Dorsolateral prefrontal cortex (tissue), 120 donors: ENCODE measurements at regions of chr10 and their contacts with region 1.

Region 1: DNA sequence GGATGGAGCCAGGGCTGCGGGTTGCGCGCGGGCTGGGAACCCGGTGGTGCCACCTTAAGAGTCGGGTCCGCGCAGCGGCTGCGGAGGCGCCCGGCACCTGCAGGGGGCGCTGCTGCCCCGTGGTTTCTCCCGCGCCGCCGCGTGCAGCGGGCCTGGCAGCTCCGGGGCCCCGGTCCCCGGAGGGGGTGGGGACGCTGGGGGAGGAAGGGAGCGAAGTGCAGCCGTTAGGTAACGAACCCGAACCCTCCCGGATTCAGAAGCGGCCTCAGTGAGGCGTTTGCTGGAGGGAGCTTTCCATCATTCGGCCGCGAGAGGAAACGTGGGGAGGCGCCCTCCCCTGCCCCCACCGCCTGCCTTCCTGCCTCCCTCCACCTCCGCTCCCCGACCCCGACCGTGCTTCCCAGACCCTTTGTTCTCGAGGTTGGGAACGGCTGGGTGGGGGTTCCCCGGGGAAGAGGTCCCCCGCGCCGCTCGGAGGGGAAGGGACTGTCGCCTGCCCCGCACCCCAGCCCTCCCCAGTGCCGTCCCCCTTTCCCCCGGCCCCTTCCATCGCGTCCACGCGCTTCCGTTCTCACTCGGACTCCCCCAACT is 29.6 kb downstream of the SKIDA1 start:
- DNase-seq: peak; percentile 73 to 94 (median 82)
- H3K4me3 ChIP-seq: peak overlapping the region; percentile 66 to 92 (median 85)
- H3K27ac ChIP-seq: peak overlapping the region in 58 of 59 donors; percentile 24 to 97 (median 90)
- H3K27me3 ChIP-seq: peaks cover 0 to 5% (median 0%) of the 10 kb centered on the region in 45 donors
- CTCF ChIP-seq: peak; percentile 81 to 100 (median 98)

Region 2: GRCh38 chr10:21533467-21534279 is 37.8 kb after region 1 on chr10 and contains the start of gene MLLT10:
- intact Hi-C with region 1: loop called (anchors 2 to 5 kb)
- DNase-seq: peak; percentile 85 to 94 (median 92)
- H3K4me3 ChIP-seq: peak within 1 kb of the TSS; percentile 56 to 91 (median 80)
- H3K27ac ChIP-seq: peak within 1 kb of the TSS; percentile 92 to 100 (median 99)
- H3K27me3 ChIP-seq: no peaks in the 10 kb centered on the region
- CTCF ChIP-seq: peak in 26 of 56 donors; percentile 11 to 54 (median 29)
- total RNA-seq, gene MLLT10: 35.4 to 78.5 (median 55.3) TPM

Region 3: GRCh38 chr10:21732067-21732772 is 236.4 kb after region 1 on chr10:
- intact Hi-C with region 1: loop called (anchors 1 to 5 kb)
- DNase-seq: peak in 8 of 10 donors; percentile 39 to 77 (median 52)
- H3K4me3 ChIP-seq: peak overlapping the region in 1 of 59 donors; percentile 17
- H3K27ac ChIP-seq: no peak overlapping the region
- H3K27me3 ChIP-seq: no peaks in the 10 kb centered on the region
- CTCF ChIP-seq: peak; percentile 33 to 93 (median 80)

Region 4: GRCh38 chr10:22228943-22229801 is 733.3 kb after region 1 on chr10:
- intact Hi-C with region 1: loop called in 1 of 2 experiments (anchors 10 kb)
- DNase-seq: peak; percentile 76 to 91 (median 84)
- H3K4me3 ChIP-seq: peak overlapping the region; percentile 55 to 93 (median 78)
- H3K27ac ChIP-seq: peak overlapping the region; percentile 73 to 100 (median 98)
- H3K27me3 ChIP-seq: no peaks in the 10 kb centered on the region
- CTCF ChIP-seq: peak in 15 of 56 donors; percentile 4 to 34 (median 15)

Region 5: DNA sequence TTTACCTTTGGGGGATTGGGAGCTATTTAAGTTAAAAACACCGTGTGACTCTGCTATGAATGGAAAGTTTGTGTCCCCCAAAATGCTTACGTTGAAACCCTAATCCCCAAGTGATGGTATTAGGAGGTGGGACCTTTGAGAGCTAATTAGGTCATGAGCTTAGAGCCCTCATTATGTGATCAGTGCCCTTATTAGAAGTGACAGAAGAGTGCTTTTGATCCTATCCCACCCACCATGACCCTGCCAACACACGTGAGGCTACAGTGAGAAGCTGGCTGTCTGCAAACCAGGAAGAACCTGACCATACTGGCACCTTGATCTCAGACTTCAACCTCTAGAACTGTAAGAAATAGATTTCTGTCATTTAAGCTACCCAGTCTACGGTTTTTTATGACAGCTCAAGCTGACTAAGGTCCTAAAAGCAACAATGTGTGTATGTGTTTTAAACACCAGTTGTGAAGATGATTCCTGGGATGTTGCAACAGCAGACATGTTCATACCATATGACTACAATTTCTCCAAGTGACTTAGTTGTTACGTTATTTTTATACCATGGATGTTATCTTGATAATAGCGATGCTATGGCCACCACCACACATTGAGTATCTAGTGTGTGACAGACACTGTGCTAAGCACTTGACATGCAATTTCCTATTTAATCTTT is 1094.1 kb after region 1 on chr10:
- intact Hi-C with region 1: loop called in 1 of 2 experiments (anchors 5 kb)
- DNase-seq: no peak
- H3K4me3 ChIP-seq: no peak overlapping the region
- H3K27ac ChIP-seq: peak overlapping the region in 11 of 59 donors; percentile 2 to 57 (median 28)
- H3K27me3 ChIP-seq: no peaks in the 10 kb centered on the region
- CTCF ChIP-seq: no peak